GM10248 (cell line): ENCODE measurements at regions of chr6 and their contacts with region 1.

Region 1: GRCh38 chr6:72689107-72689954 is 67.5 kb downstream of the KCNQ5 start:
- DNase-seq: peak; percentile 68
- CTCF ChIP-seq: no peak

Region 2: DNA sequence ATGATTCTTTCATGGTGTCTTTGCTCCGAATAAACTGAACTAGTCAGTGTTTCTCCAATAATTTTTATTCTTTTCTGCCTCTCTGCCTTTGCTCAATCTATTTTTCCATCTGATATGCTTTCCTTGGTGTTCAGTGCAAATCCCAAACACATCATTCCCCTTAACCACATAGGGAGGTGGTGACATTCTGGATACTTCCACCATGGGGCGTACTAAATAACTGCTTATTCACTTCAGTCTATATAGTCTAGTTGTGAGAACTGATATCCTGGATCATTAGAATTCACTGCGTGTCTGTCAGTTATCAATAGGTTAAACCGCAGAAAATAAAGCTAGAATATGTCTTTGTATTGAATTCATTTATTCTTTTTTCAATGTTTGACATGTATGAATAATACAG is 15.6 kb after region 1 on chr6:
- CTCF ChIA-PET with region 1: interaction called, 12 read pairs
- POLR2A ChIA-PET with region 1: no interaction called
- DNase-seq: no peak
- CTCF ChIP-seq: no peak